BJ (cell line): ENCODE measurements at regions of chr9 and their contacts with region 1.

Region 1: GRCh38 chr9:131334629-131335367 is 45.3 kb downstream of the PLPP7 start:
- DNase-seq: no peak
- H3K4me3 ChIP-seq: no peak overlapping the region
- H3K27me3 ChIP-seq: no peaks in the 10 kb centered on the region
- CTCF ChIP-seq: no peak

Region 2: GRCh38 chr9:131053896-131054295 is 280.9 kb before region 1 on chr9:
- CTCF ChIA-PET with region 1: interaction called, 61 read pairs
- POLR2A ChIA-PET with region 1: no interaction called
- DNase-seq: no peak
- H3K4me3 ChIP-seq: no peak overlapping the region
- H3K27me3 ChIP-seq: no peaks in the 10 kb centered on the region; the same call in 1 of the 2 replicates
- CTCF ChIP-seq: no peak

Region 3: GRCh38 chr9:131149688-131150053 is 185.1 kb before region 1 on chr9:
- CTCF ChIA-PET with region 1: interaction called, 12 read pairs
- POLR2A ChIA-PET with region 1: no interaction called
- DNase-seq: no peak
- H3K4me3 ChIP-seq: no peak overlapping the region
- H3K27me3 ChIP-seq: no peaks in the 10 kb centered on the region
- CTCF ChIP-seq: no peak

Region 4: GRCh38 chr9:131167146-131167692 is 167.6 kb before region 1 on chr9:
- CTCF ChIA-PET with region 1: interaction called, 26 read pairs
- POLR2A ChIA-PET with region 1: no interaction called
- DNase-seq: no peak
- H3K4me3 ChIP-seq: no peak overlapping the region
- H3K27me3 ChIP-seq: no peaks in the 10 kb centered on the region
- CTCF ChIP-seq: no peak

Region 5: GRCh38 chr9:131178382-131178781 is 156.4 kb before region 1 on chr9:
- CTCF ChIA-PET with region 1: interaction called, 259 read pairs
- POLR2A ChIA-PET with region 1: no interaction called
- DNase-seq: no peak
- H3K4me3 ChIP-seq: no peak overlapping the region
- H3K27me3 ChIP-seq: no peaks in the 10 kb centered on the region
- CTCF ChIP-seq: peak; percentile 92